ENCODE measurements at regions of chr14 and their contacts with region 1.

Region 1: DNA sequence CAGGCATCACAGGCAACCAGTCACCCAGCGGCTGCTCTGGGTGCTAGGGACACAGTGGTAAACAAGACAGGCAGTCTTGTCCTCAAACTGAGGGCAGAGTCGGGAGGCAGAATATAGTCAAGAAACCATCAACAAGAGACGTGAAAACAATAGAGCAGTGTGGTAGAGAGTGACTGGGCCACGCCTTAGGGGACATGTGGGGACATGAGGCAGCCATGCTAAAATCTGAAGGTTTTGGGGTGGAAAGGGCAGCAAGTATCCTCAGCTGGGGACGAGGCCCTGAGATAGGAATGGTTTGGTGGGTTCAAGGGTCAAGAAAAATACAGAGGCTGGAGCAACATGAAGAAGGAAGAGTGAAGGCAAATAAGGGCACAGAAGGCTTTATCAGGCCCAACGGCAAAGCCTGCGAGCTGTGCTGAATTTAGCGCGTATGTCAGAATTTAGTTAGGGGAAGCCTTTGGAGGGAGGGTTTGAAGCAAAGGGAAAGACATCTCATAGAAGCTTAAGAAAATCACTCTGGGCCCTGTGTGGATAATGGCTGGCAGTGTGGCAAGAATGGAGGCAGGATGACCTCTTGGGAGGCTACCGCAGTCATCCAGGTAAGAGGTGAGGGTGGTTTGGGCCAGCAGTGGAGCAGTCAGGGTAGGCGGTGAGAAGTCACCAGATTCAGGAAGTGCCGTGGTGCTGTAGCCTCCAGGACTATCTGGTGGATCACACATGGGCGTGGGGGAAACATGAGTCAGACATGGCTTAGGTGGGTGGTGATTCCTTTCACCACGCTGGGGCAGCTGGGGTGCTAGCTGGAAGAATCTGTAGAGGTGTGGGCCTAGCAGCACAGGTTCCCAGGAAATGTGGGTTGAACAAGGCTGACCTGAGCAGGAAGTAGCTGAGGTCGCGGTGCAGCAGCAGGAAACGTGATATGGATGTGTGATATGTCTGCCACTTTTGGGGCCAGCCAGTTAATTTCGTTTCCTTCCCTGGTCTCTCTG is 3.0 kb downstream of the EVL start:
- DNase-seq: peak; percentile 95
- H3K4me3 Mint-ChIP-seq: peak overlapping the region; percentile 87
- H3K27ac Mint-ChIP-seq: peak overlapping the region; percentile 98
- H3K4me1 Mint-ChIP-seq: peaks cover 77% of the 10 kb centered on the region
- H3K27me3 Mint-ChIP-seq: no peaks in the 10 kb centered on the region

Region 2: DNA sequence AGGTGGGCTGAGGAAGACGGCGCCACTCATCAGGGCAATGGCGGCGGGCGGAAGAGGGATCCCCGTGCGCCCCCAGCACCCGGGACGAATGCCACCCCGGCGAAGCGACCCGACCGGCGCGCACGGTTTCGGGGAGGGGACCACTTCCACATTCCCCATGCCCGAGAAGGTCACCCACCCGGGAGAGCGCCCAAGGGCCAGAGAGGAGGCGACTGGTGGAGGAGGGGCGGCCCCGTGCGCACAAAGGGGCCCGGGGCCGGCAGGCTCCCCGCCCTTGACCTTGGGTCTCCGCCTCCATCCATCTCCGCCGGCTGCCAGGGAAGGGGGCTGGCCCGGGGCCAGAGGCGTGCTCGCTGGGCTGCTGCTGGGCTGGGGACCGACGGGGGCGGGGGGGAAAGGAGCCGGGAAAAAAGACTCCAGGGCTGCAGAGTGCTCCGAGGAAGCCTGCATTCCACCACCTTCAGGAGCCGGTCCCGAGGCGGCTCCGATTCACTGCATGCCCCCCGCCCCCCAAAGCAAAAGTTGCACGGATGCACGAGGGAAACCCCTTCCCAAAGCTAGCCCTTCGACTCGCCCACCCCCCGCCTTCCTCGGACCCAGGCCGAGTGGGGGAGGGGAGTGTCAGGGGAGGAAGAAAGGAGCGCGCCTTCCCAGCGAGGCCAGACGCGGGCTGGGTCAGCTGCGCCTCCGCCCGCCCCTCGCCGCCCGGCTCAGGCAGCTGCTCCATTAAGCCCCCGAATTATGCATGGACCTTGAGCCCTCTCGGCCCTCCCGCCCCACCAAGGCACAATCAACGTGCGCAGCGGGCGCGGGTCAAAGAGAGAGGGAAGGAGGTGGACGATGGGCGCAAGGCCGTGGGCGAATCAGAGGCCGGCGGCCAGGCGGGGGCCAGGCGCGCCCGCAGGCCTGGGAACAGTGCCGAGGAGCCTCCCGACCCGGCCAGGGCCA is 822.4 kb before region 1 on chr14:
- intact Hi-C with region 1: loop called (anchors 5 kb)
- DNase-seq: peak; percentile 80
- H3K4me3 Mint-ChIP-seq: peak overlapping the region; percentile 90
- H3K27ac Mint-ChIP-seq: peak overlapping the region; percentile 99
- H3K4me1 Mint-ChIP-seq: peaks cover 77% of the 10 kb centered on the region
- H3K27me3 Mint-ChIP-seq: no peaks in the 10 kb centered on the region

Region 3: GRCh38 chr14:100049220-100049619 is 19.0 kb before region 1 on chr14:
- intact Hi-C with region 1: loop called (anchors 2 kb)
- DNase-seq: no peak
- H3K4me3 Mint-ChIP-seq: no peak overlapping the region
- H3K27ac Mint-ChIP-seq: peak overlapping the region; percentile 8
- H3K4me1 Mint-ChIP-seq: peaks cover 24% of the 10 kb centered on the region
- H3K27me3 Mint-ChIP-seq: no peaks in the 10 kb centered on the region

Region 4: GRCh38 chr14:100078991-100079725 is 10.9 kb after region 1 on chr14:
- intact Hi-C with region 1: loop called (anchors 1 kb)
- DNase-seq: peak; percentile 95
- H3K4me3 Mint-ChIP-seq: peak overlapping the region; percentile 79
- H3K27ac Mint-ChIP-seq: peak overlapping the region; percentile 91
- H3K4me1 Mint-ChIP-seq: peaks cover 93% of the 10 kb centered on the region
- H3K27me3 Mint-ChIP-seq: no peaks in the 10 kb centered on the region

Region 5: GRCh38 chr14:100102181-100102845 is 34.0 kb after region 1 on chr14:
- intact Hi-C with region 1: no loop called
- DNase-seq: no peak
- H3K4me3 Mint-ChIP-seq: peak overlapping the region; percentile 70
- H3K27ac Mint-ChIP-seq: peak overlapping the region; percentile 89
- H3K4me1 Mint-ChIP-seq: peaks cover 86% of the 10 kb centered on the region
- H3K27me3 Mint-ChIP-seq: no peaks in the 10 kb centered on the region

Region 6: DNA sequence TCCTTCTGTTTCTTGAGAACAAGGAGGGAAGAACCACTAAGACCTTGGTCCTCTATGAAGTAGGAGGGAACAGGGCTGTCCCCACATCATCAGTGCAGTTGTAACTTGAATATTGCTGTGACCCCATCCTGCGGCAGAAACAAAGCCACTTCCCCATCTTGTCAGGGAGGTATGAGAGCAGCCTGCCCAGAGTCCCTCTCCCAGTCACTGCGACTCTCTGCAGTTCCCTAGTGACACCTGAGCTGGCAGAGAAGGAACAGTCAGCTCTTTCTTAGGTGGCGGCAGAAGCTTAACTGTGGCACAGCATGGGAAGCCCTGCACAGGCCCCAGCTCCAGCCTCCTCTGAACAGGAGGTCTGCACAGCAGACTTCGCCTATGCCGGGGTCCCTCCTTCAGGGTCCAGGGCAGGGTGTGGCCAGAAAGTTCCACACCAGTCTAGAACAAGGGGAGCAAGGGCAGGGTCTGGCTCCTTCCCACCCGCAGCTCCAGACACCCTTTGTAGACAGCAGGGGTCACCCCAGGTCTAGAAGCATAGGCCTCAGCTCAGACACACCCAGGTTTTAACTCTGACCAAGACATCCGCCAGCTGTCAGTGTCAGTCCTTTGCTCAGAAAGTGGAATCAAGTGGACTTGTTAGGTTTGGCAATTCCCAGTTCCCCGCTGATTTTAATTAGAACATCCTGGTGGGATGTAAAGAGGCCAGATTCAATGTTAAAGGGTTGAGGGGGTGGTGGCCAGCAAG is 54.4 kb after region 1 on chr14:
- intact Hi-C with region 1: no loop called
- DNase-seq: no peak
- H3K4me3 Mint-ChIP-seq: no peak overlapping the region
- H3K27ac Mint-ChIP-seq: peak overlapping the region; percentile 17
- H3K4me1 Mint-ChIP-seq: peaks cover 18% of the 10 kb centered on the region
- H3K27me3 Mint-ChIP-seq: no peaks in the 10 kb centered on the region

Region 7: DNA sequence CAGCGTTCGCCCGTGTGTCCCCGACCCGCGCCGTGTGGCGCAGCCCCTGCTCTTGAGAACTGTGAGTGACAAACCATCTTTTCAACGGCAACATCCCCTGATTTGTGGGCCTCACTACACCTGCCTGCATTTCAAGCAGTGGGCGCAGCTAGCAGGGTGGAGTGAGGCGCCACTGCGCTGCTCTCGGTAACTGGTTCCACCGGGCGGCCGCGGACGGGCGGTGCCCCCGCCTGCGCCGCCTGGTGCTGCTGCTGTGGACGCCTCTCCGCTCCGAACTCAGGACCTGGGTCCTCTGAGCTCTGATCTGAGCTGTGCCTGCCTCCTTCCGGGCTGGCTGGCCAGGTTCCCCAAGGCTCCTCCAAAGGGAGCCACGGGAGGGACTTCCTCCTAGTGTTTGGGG is 97.1 kb after region 1 on chr14:
- intact Hi-C with region 1: no loop called
- DNase-seq: no peak
- H3K4me3 Mint-ChIP-seq: no peak overlapping the region
- H3K27ac Mint-ChIP-seq: no peak overlapping the region
- H3K4me1 Mint-ChIP-seq: peaks cover 6% of the 10 kb centered on the region
- H3K27me3 Mint-ChIP-seq: peaks cover 26% of the 10 kb centered on the region

Region 8: DNA sequence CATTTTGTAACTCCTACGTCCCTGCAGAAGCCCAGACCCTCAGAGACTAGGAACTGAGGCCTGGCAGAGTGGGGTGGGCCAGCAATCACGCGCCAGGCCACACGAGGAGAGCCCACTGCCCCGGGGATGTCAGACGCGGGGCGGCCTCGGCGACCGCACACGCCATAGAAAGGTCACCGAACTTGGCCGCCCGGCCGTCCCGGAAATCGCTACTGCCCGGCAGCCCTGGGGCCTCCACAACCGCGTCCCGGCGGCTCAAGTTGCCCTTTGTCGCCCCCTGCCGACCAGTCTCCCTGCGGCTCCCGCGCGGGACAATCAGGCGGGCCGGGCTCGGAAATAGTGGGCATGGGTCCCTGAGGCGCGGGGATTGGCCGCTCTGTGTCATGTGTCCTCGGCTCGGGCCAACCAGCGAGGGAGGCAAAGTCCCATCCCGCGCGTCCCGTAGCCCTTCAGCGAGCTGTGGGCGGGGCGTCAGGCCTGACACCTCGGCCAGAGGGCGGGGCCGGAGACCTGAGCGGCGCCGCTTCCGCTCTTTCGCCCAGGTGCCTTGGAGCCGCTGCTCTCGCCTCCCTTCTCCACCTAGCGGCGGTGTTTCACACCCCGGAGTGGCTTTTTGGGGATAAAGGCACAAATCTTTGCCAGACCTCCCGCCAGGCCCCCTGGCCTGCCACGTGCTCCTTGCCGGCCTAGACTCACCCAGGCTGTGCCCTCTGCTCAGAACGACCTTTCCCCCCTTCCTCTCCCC is 124.6 kb after region 1 on chr14:
- intact Hi-C with region 1: loop called (anchors 2 kb)
- DNase-seq: peak; percentile 100
- H3K4me3 Mint-ChIP-seq: peak overlapping the region; percentile 74
- H3K27ac Mint-ChIP-seq: peak overlapping the region; percentile 93
- H3K4me1 Mint-ChIP-seq: peaks cover 9% of the 10 kb centered on the region
- H3K27me3 Mint-ChIP-seq: no peaks in the 10 kb centered on the region

Region 9: DNA sequence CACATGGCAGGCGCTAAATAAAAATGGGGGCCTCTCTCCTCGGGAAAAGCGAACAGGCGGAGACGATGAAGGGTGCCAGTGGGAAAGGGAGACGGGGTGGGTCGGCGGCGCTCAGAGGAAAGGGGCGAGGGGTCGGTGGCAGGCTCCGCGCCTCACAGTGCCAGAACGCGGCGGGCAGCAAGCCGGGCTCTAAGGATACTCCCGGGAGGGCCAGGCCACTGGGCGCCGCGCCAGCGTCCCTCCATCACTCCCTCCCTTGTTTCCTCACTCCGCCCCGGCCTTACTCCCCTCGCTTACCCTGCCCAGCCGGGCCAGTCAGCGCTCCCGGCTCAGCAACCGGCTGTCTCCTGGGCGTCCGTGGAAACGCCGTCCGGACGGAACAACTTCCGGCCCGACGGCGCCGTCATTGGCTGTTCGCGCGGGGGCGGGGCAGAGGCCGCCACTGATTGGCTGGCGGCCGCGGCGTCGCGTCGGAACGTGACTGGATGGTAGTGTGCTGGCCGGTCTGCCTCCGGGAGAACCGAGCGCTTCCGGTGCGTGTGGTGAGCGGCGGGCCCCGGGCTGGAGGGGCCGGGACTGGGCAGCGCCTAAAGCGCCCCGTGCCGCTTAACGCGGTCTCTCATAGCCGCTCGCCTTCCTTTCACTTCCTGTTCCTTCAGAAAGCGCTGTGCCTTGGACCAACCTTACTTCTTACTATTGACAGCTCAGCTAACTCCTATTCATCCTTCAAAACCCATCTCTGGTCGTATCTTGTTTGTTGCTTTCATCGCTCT is 307.9 kb after region 1 on chr14:
- intact Hi-C with region 1: loop called (anchors 5 kb)
- DNase-seq: peak; percentile 99
- H3K4me3 Mint-ChIP-seq: peak within 1 kb of the TSS; percentile 99
- H3K27ac Mint-ChIP-seq: peak within 1 kb of the TSS; percentile 98
- H3K4me1 Mint-ChIP-seq: peaks cover 47% of the 10 kb centered on the region
- H3K27me3 Mint-ChIP-seq: no peaks in the 10 kb centered on the region